Sigmoid colon (tissue), 7 donors: ENCODE measurements at regions of chr7 and their contacts with region 1.

Region 1: GRCh38 chr7:103573479-103574058 is 127.6 kb upstream of the SLC26A5 start:
- DNase-seq: no peak
- H3K4me3 ChIP-seq: no peak overlapping the region
- H3K27ac ChIP-seq: no peak overlapping the region
- H3K4me1 ChIP-seq: peaks cover 0 to 5% (median 0%) of the 10 kb centered on the region in 4 donors
- H3K27me3 ChIP-seq: no peaks in the 10 kb centered on the region
- CTCF ChIP-seq: peak in 3 of 4 experiments; percentile 15 to 55 (median 20)
- EP300 ChIP-seq: no peak
- POLR2A ChIP-seq: no peak

Region 2: DNA sequence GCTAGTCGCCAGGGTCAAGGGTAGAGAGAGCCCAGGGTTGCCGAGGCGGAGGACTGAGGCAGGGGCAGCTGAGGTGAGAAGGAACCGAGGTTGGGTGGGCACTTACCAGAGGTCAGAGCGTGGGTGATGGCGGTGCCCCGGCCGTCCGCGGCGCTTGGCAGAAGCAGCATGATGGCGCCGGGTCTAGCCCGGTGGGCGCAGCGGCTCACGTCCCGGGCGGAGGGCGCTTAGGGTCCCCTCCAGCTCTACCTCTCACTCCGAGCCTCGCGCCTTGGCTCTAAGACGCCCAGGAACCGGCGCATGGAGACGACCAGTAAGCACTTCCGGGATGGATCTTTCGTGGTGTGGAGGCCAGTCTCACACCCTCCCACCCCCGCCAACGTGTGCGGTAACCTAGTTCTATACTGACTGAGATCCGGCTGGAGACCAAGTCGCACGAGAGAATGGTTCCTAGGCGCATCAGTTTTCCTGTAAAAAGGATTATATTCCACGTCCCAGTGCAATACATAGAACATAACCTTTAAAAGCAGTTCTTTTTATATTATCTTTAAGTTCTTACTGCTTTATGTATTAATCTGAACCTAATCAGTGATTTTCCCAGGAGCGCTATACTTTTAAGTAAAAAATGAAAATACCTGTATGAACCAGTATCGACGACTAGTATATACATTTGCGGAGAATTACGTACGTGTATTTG is 229.0 kb before region 1 on chr7 and contains the start of gene DNAJC2:
- intact Hi-C with region 1: no loop called
- DNase-seq: peak; percentile 94
- H3K4me3 ChIP-seq: peak within 1 kb of the TSS; percentile 68 to 92 (median 76)
- H3K27ac ChIP-seq: peak within 1 kb of the TSS; percentile 82 to 86 (median 84)
- H3K4me1 ChIP-seq: peaks cover 0 to 45% (median 39%) of the 10 kb centered on the region in 4 donors
- H3K27me3 ChIP-seq: no peaks in the 10 kb centered on the region
- CTCF ChIP-seq: no peak
- EP300 ChIP-seq: no peak
- POLR2A ChIP-seq: peak in 1 of 2 donors; percentile 26
- total RNA-seq, gene DNAJC2: 10.7 to 21.9 (median 18.7) TPM

Region 3: DNA sequence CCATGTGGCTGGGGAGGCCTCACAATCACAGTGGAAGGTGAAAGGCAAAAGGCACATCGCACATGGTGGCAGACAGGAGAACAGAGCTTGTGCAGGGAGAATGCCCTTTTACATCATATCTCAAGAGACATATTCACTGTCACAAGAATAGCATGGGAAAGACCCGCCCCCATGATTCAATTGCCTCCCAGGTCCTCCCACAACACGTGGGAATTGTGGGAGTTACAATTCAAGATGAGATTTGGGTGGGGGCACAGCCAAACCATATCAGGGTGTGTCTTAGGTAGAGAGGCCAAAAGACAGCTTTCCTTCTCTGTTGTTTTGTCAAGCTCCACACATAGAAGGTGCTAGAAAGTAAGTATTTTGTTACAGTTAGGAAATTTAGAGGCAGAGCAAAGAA is 106.8 kb before region 1 on chr7:
- intact Hi-C with region 1: no loop called
- DNase-seq: no peak
- H3K4me3 ChIP-seq: no peak overlapping the region
- H3K27ac ChIP-seq: no peak overlapping the region
- H3K4me1 ChIP-seq: no peaks in the 10 kb centered on the region
- H3K27me3 ChIP-seq: no peaks in the 10 kb centered on the region
- CTCF ChIP-seq: no peak
- EP300 ChIP-seq: no peak
- POLR2A ChIP-seq: no peak

Region 4: GRCh38 chr7:103795787-103796186 is 222.2 kb after region 1 on chr7:
- intact Hi-C with region 1: no loop called
- DNase-seq: no peak
- H3K4me3 ChIP-seq: no peak overlapping the region
- H3K27ac ChIP-seq: no peak overlapping the region
- H3K4me1 ChIP-seq: no peaks in the 10 kb centered on the region
- H3K27me3 ChIP-seq: no peaks in the 10 kb centered on the region
- CTCF ChIP-seq: no peak
- EP300 ChIP-seq: no peak
- POLR2A ChIP-seq: no peak

Region 5: DNA sequence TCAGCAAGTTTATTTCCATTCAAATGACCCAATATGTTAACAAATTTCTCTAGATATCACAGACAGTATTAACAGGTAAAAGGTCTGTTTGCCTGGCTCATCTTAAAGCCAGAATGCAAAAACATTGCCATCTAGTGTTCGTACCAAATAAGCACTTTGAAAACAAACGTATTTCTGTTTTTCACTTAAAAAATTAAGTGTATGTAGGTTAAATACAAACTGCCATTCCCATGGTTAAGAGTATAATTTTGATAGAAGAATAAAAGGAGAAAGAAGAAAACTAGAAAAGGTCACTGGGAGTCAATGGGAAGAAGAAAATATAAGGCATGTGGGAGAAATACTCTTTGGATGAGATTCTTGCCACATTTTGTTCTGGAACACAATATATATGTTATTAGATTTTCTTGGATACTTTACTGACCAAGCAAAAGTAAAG is 583.3 kb after region 1 on chr7:
- intact Hi-C with region 1: loop called (anchors 5 kb)
- DNase-seq: no peak
- H3K4me3 ChIP-seq: no peak overlapping the region
- H3K27ac ChIP-seq: no peak overlapping the region
- H3K4me1 ChIP-seq: no peaks in the 10 kb centered on the region
- H3K27me3 ChIP-seq: no peaks in the 10 kb centered on the region
- CTCF ChIP-seq: peak in 1 of 4 experiments; percentile 43
- EP300 ChIP-seq: no peak
- POLR2A ChIP-seq: no peak